Gastrocnemius medialis (tissue), 4 donors: ENCODE measurements at regions of chr10 and their contacts with region 1.

Region 1: GRCh38 chr10:124560377-124561105 is 98.9 kb downstream of the LHPP start:
- DNase-seq: peak; percentile 87 to 93
- ATAC-seq: peak; percentile 85 to 93
- H3K4me3 ChIP-seq: peak overlapping the region in 2 of 4 donors; percentile 18 to 25
- H3K27ac ChIP-seq: peak overlapping the region; percentile 94 to 99 (median 95)
- H3K4me1 ChIP-seq: peaks cover 50 to 68% of the 10 kb centered on the region in 2 donors
- H3K27me3 ChIP-seq: no peaks in the 10 kb centered on the region
- CTCF ChIP-seq: no peak
- POLR2A ChIP-seq: peak; percentile 29 to 68

Region 2: DNA sequence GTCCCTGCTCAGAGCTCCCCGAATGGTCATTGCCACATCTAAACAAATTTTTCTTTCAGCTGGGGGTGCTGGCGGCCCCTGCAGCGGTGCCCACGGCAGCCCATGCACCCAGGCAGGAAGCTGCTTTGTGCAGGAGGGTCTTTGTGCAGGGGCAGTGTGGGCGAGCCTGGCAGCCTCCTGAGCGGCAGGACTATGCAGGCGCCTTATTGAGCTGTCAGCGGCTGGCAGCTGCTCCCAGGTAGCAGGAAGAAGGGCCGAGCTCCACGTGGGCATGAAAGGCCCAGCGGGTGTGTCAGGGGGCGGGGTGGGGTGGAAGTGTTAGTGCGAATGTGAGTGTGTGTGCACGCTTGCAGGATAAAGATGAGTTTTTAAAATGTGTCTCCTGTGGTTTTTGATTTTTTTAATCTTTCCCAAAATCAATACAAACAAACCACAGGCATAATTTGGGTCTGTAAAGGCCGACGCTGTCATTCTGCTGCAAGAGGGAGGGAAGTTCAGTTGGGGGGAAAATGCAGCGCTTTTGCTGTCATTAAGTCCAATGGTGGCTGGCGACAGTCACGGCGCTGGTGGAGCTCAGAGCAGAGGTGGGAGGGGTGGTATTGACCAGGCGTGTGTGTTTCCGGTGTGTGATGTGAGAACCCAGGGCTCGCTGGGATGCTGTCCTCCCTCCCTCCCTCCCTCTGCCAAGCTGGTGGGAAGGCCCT is 15.0 kb before region 1 on chr10:
- in situ Hi-C with region 1: no loop called
- intact Hi-C with region 1: loop called (anchors 1 kb)
- DNase-seq: no peak
- ATAC-seq: no peak
- H3K4me3 ChIP-seq: no peak overlapping the region
- H3K27ac ChIP-seq: peak overlapping the region in 3 of 4 donors; percentile 28 to 94 (median 92)
- H3K4me1 ChIP-seq: peaks cover 14 to 31% of the 10 kb centered on the region in 2 donors
- H3K27me3 ChIP-seq: no peaks in the 10 kb centered on the region
- CTCF ChIP-seq: no peak
- POLR2A ChIP-seq: no peak